Activated T-helper 1 cell treated with anti-CD3 and anti-CD28 coated beads, Interleukin-12 subunit alpha, Interleukin-12 subunit beta, Interleukin-2, Interleukin-4 antibody, amounts not matched to agents 30 ng/mL and 10 ng/mL and 1 ng/mL, durations not matched to agents 14 hours and 24 hours and 36 hours (primary cell): ENCODE measurements at regions of chr12 and their contacts with region 1.

Region 1: DNA sequence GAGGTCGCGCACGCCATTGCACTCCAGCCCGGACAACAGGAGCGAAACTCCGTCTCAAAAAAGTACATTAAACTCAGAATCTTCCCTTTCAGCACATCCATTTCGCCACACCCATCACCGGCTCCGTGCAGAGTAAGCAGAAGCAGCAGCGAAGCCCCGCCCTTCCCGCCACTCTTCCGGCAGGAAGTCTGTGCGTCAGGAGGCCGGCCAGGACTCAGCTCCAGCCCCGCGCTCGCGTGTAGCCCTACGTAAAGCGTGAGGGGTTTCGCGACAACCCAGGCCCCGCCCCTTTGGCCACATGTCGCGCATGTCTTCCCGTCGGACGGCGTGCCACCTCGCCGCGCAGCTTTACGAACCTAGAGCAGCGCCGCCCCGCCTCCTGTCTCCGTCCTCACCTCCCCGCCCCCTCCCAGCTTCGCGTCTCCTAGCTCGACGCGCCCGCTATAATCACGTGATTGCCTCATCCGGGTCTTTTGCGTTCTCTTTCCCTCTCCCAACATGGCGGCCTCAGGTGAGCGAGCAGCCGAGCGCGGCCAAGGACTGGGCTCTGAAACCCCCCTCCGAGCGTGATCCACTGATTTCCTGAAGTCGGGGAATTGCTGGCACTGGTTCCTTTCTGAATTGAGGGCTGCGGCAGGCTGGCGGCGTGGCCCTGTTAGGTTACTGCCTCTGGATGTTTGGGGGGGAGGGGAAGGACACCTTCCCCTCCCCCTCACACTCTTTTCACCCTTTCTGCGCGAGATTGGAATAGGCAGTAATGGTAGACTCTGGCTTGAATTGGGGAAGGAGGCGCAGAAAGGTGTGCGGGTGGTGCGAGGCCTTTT is at the start of gene EIF4B:
- DNase-seq: peak; percentile 99
- H3K4me3 Mint-ChIP-seq: peak within 1 kb of the TSS; percentile 95
- H3K27ac Mint-ChIP-seq: peak within 1 kb of the TSS; percentile 97
- H3K4me1 Mint-ChIP-seq: peaks cover 35% of the 10 kb centered on the region
- H3K27me3 Mint-ChIP-seq: peaks cover 4% of the 10 kb centered on the region
- total RNA-seq, gene EIF4B: 463 and 473 TPM in 2 replicates

Region 2: GRCh38 chr12:52050761-52051541 is 955.2 kb before region 1 on chr12 and contains the start of gene NR4A1:
- intact Hi-C with region 1: loop called (anchors 1 kb)
- DNase-seq: peak; percentile 96
- H3K4me3 Mint-ChIP-seq: peak within 1 kb of the TSS; percentile 96
- H3K27ac Mint-ChIP-seq: peak within 1 kb of the TSS; percentile 92
- H3K4me1 Mint-ChIP-seq: peaks cover 42% of the 10 kb centered on the region
- H3K27me3 Mint-ChIP-seq: no peaks in the 10 kb centered on the region
- total RNA-seq, gene NR4A1: 52.7 and 60.3 TPM in 2 replicates

Region 3: DNA sequence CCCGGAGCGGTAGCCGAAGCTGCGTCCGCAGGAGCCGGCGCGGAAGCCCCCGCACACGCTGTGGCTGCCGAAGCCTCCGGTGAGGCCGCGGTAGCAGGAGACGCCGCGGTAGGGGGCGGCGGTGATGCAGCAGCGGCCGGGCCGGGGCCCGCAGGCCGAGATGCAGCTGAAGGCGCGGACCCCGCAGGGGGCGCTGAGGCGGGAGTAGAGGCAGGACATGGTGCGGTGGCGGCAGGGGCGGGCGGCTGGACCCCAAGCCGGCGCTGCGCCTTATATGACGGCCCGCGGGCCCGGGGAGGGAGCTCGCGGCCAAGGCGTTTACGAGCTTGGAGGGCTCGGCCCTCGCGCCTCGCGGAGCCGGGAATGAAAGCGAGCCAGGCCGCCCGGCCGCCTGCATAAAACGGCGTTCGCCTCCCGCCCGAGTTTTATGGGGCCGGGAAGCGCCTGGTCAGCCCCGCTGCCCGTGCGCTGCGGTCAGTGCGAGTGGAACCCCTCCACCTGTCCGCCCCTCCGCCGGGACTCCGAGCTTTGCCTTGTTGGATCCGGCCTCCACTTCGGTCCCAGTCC is 747.8 kb before region 1 on chr12:
- intact Hi-C with region 1: no loop called
- DNase-seq: no peak
- H3K4me3 Mint-ChIP-seq: no peak overlapping the region
- H3K27ac Mint-ChIP-seq: no peak overlapping the region
- H3K4me1 Mint-ChIP-seq: peaks cover 28% of the 10 kb centered on the region
- H3K27me3 Mint-ChIP-seq: peaks cover 52% of the 10 kb centered on the region

Region 4: DNA sequence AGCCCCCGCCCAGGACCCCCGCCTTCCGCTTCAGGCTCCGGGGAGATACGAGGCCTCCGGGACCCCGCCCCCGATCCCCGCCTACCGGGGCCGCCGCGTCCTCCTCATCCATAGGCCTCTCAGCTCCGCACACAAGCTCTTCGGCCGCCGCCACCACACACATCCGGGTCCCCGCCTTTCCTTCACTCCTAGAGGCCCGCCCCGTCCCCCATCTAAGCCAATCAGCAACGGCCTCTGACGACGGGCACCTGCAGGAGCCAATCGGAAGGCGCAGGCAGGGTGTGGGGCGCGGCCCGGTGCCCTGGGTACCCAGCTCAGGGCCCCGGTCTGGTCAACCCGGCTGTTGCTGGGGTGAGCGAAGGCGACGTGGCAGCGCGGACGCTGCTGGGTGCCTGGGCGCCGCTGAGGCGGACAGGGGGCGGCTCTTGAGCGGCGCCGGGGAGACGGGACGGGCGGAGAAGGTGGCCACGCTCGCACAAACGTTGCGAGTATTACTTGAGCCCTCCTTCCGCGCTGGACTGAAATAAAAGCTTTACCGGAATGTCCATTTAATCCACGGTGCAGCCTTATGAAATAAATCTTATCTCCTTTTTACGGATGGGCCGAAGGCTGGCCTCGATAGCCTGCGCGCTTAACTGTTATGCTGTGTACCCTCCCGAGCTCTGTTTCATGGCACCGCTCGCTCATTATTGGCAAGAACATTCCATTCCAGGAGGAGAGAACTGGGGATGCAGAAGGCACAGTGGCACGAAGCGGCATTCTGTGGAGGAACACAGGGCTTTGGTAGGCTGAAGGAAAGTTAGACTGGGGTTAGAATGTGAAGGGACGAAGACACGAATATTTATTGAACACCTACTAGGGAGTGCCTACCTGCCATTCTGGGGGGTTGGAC is 73.3 kb after region 1 on chr12 and contains the start of gene SPRYD3:
- intact Hi-C with region 1: loop called (anchors 1 kb)
- DNase-seq: peak; percentile 97
- H3K4me3 Mint-ChIP-seq: peak within 1 kb of the TSS; percentile 93
- H3K27ac Mint-ChIP-seq: peak within 1 kb of the TSS; percentile 92
- H3K4me1 Mint-ChIP-seq: peaks cover 36% of the 10 kb centered on the region
- H3K27me3 Mint-ChIP-seq: no peaks in the 10 kb centered on the region
- total RNA-seq, gene SPRYD3: 41.2 and 42.6 TPM in 2 replicates

Region 5: DNA sequence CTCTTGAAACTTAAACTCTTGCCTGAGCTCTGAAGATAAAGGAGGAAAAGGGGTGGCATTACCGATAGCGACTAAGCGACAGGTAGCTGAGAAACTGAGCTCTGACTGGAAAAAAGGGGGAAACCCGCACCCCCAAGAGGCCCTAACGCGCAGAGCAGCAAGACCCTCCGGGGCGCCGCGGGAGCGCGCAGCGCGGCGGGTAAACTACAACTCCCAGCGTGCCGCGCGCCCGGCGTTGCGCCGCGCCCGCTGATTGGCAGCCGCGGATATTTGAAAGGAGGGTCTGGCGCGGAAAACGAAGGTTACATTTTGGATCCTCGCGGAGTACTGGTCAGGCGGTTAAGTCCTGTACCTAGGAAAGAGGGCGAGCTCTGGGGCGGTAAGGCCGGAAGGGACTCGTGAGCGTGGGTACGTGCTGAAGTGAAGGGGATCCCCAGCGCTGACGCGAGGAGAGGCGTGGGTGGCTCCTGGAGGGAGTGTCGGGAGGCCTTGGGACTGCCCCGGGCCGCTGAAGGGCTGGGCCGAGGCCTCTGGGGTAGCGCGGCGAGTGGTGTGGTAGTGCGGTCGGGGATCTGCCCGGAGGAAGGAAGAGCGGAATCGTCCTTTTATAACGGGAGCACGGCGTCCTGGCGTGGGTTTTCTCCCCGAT is 261.9 kb after region 1 on chr12 and contains the start of gene ESPL1:
- intact Hi-C with region 1: loop called (anchors 1 kb)
- DNase-seq: peak; percentile 81
- H3K4me3 Mint-ChIP-seq: peak within 1 kb of the TSS; percentile 90
- H3K27ac Mint-ChIP-seq: peak within 1 kb of the TSS; percentile 88
- H3K4me1 Mint-ChIP-seq: peaks cover 43% of the 10 kb centered on the region
- H3K27me3 Mint-ChIP-seq: no peaks in the 10 kb centered on the region
- total RNA-seq, gene ESPL1: 61.2 and 68.4 TPM in 2 replicates

Region 6: DNA sequence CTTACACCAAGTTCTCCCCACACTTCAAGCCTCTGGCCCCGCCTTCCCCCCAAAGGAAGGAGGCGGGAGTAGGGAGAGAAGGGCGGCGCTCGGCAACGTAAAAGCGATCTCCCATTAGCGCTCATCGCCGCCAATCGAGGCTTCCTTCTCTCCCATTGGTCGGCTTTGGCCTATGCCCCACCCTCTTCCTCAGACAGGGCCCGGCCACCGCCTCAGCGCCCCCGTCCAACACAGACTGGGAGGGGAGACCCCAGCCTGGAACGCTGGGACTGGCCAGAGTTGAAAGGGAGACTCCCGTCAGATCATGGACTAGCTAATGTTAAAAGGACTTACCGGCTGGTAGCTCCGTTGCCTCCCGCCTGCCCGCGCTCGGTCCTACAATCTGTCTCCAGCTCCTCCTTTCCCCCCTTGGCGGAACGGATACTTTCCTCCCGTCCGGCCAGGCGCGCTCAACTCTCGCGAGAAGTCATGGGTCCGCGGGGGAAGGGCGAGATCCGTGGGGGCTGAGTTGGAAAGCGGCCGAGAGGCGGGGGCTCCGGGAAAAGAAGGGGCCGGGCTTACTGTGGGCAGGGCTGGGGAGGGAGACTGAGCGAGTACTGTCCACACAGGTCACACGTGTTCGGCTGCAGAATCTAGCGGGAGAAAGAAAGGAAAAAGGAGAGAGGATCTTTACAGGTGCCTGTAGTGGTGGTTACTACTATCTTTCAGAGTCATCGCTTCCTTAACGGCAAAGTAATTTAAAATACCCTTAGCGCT is 619.9 kb after region 1 on chr12 and contains the start of gene ATF7:
- intact Hi-C with region 1: loop called (anchors 1 kb)
- DNase-seq: peak; percentile 98
- H3K4me3 Mint-ChIP-seq: peak within 1 kb of the TSS; percentile 99
- H3K27ac Mint-ChIP-seq: peak within 1 kb of the TSS; percentile 89
- H3K4me1 Mint-ChIP-seq: peaks cover 36% of the 10 kb centered on the region
- H3K27me3 Mint-ChIP-seq: no peaks in the 10 kb centered on the region
- total RNA-seq, gene ATF7: 21.5 and 25.9 TPM in 2 replicates

Region 7: GRCh38 chr12:53757095-53757770 is 751.0 kb after region 1 on chr12:
- intact Hi-C with region 1: loop called (anchors 10 kb)
- DNase-seq: peak; percentile 71
- H3K4me3 Mint-ChIP-seq: peak overlapping the region; percentile 43
- H3K27ac Mint-ChIP-seq: peak overlapping the region; percentile 56
- H3K4me1 Mint-ChIP-seq: peaks cover 16% of the 10 kb centered on the region
- H3K27me3 Mint-ChIP-seq: peaks cover 36% of the 10 kb centered on the region